HCT116 (cell line): ENCODE measurements at regions of chr10 and their contacts with region 1.

Region 1: DNA sequence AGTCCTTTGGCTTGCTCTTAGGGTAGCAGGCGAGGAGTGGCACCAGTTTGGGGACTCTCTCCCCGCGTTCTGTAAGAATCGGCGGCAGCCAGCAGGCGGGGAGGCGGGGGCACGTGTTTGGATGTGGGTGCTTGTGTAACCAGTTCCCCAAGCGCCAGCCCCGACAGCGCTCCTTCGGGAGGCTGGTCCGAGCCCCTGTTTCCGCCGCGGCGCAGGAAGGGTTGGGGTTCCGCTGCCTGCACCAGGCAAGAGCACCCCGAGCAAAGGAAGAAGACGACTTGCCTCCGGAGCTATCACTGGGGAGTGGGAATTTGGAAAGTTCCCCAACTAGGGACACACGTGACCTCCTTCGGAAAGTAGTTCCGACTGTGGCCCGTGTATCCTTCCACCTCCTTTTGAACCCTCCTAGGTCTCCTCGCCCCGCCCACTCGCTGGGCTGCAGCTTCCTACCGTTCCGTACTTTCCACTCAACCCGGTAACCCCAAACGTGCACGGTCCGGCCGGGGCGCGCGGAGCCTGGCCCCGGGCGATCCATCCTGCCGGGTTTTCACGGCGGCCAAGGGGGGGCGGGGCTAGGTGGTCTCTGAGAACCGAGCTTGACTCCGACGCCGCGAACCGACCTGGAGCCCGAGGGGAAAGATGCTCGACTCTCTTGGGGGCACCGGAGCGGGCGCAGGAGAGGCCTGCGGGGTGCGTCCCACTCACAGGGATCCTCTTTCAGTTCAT is 1.2 kb downstream of the KLLN start:
- DNase-seq: peak; percentile 98
- ATAC-seq: peak; percentile 71
- H3K4me3 ChIP-seq: peak overlapping the region; percentile 84 to 93
- H3K27ac ChIP-seq: peak overlapping the region; percentile 94
- H3K4me1 ChIP-seq: peaks cover 14 to 28% of the 10 kb centered on the region in 2 experiments; a peak in 3 of 4 replicates
- H3K27me3 ChIP-seq: no peaks in the 10 kb centered on the region
- CTCF ChIP-seq: no peak
- POLR2A ChIP-seq: peak; percentile 87
- RAD21 ChIP-seq: no peak; the same call in 1 of the 2 replicates

Region 2: GRCh38 chr10:87817609-87818504 is 44.3 kb before region 1 on chr10 and contains the start of gene ATAD1:
- CTCF ChIA-PET with region 1: no interaction called
- POLR2A ChIA-PET with region 1: interaction called, 4 read pairs
- RAD21 ChIA-PET with region 1: no interaction called
- intact Hi-C with region 1: loop called (anchors 2 kb)
- DNase-seq: peak; percentile 77
- ATAC-seq: peak; percentile 92
- H3K4me3 ChIP-seq: peak within 1 kb of the TSS; percentile 83 to 85
- H3K27ac ChIP-seq: peak within 1 kb of the TSS; percentile 86
- H3K4me1 ChIP-seq: peaks cover 7 to 22% of the 10 kb centered on the region in 2 experiments
- H3K27me3 ChIP-seq: no peaks in the 10 kb centered on the region
- CTCF ChIP-seq: peak in 1 of 3 experiments; percentile 31; a peak in 2 of 6 replicates
- POLR2A ChIP-seq: peak; percentile 89
- RAD21 ChIP-seq: no peak
- total RNA-seq, gene ATAD1: 66.4 TPM

Region 3: DNA sequence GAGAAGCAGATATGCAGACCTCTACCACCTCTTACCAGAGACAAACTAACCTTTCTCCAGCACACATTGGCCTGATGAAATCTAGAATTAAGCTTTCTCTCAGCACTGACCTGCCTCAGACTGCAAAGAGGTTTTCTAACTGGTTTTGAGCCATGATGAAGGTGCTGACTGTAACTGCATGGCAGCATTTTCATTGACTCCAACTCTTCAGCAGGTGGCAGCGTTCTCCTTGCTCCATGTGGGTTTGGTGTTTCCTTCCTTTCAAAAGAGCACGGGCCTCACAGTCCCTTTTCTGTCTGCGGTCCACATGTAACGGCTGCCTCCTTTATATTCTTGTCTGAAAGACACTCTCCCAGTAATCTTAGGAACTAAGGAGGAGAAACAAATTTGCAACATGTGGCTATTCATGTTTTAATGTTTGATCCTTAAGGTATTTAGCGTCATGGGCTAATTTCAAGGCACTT is 11.3 kb before region 1 on chr10:
- CTCF ChIA-PET with region 1: interaction called, 10 read pairs
- POLR2A ChIA-PET with region 1: interaction called, 16 read pairs
- RAD21 ChIA-PET with region 1: no interaction called
- intact Hi-C with region 1: loop called (anchors 2 kb)
- DNase-seq: no peak
- ATAC-seq: peak; percentile 88
- H3K4me3 ChIP-seq: no peak overlapping the region
- H3K27ac ChIP-seq: no peak overlapping the region
- H3K4me1 ChIP-seq: peaks cover 3 to 23% of the 10 kb centered on the region in 2 experiments; a peak in 3 of 4 replicates
- H3K27me3 ChIP-seq: no peaks in the 10 kb centered on the region
- CTCF ChIP-seq: peak; percentile 59 to 70 (median 67); a peak in 5 of 6 replicates
- POLR2A ChIP-seq: no peak
- RAD21 ChIP-seq: peak; percentile 88

Region 4: GRCh38 chr10:88114368-88114767 is 252.3 kb after region 1 on chr10:
- CTCF ChIA-PET with region 1: interaction called, 12 read pairs
- POLR2A ChIA-PET with region 1: interaction called, 12 read pairs
- RAD21 ChIA-PET with region 1: interaction called in 1 of 2 experiments, 6 read pairs
- intact Hi-C with region 1: loop called (anchors 1 kb)
- DNase-seq: peak; percentile 35
- ATAC-seq: peak; percentile 69
- H3K4me3 ChIP-seq: no peak overlapping the region
- H3K27ac ChIP-seq: no peak overlapping the region
- H3K4me1 ChIP-seq: peaks cover 10 to 17% of the 10 kb centered on the region in 2 experiments
- H3K27me3 ChIP-seq: no peaks in the 10 kb centered on the region
- CTCF ChIP-seq: peak; percentile 61 to 69 (median 63); a peak in 5 of 6 replicates
- POLR2A ChIP-seq: no peak
- RAD21 ChIP-seq: peak; percentile 74

Region 5: GRCh38 chr10:88541116-88541626 is 679.1 kb after region 1 on chr10:
- CTCF ChIA-PET with region 1: no interaction called
- POLR2A ChIA-PET with region 1: no interaction called
- RAD21 ChIA-PET with region 1: no interaction called
- intact Hi-C with region 1: no loop called
- DNase-seq: no peak
- ATAC-seq: no peak
- H3K4me3 ChIP-seq: no peak overlapping the region
- H3K27ac ChIP-seq: no peak overlapping the region
- H3K4me1 ChIP-seq: no peaks in the 10 kb centered on the region
- H3K27me3 ChIP-seq: no peaks in the 10 kb centered on the region
- CTCF ChIP-seq: no peak
- POLR2A ChIP-seq: no peak
- RAD21 ChIP-seq: no peak